Heart right ventricle (tissue), 16 donors: ENCODE measurements at regions of chr20 and their contacts with region 1.

Region 1: DNA sequence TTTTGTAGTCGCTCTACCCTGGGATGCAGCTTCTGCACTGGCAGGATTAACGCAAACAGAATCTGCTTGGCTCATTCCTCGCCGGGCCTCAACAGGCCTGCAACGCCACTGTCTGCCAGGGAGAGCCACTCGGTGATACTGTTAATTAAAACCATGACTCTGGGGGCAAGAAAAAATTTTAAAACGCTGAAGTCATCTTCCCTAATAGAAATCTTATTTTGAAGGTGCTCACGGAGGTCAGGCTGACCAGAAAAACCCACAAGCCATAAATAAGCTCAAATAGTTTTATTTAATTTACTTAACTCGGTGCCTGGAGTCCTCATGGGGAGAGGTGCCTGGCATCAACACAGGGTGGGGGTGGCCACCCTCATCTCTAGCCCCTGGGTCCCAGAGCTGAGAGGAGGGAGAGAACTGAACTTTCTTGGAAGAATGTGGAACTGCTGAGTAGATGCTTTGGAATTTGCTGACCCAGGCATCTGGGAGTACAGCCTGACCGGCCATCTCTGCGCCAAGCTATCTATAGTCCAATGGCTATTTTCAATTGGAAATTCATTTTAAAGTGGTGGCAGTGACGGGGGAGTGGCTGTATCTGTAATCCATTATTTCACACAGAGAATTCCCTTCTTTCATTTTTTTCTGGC is 104.7 kb downstream of the CDH26 start:
- DNase-seq: no peak
- ATAC-seq: peak in 5 of 8 donors; percentile 20 to 55 (median 35)
- H3K4me3 ChIP-seq: no peak overlapping the region
- H3K27ac ChIP-seq: peak overlapping the region in 2 of 10 donors; percentile 25 to 37
- H3K4me1 ChIP-seq: peaks cover 3 to 44% (median 21%) of the 10 kb centered on the region in 9 donors
- H3K27me3 ChIP-seq: peaks cover 0 to 5% (median 0%) of the 10 kb centered on the region in 7 donors
- CTCF ChIP-seq: no peak

Region 2: GRCh38 chr20:60131375-60131774 is 68.4 kb after region 1 on chr20:
- intact Hi-C with region 1: loop called in 1 of 10 experiments (anchors 5 kb)
- DNase-seq: no peak
- ATAC-seq: peak in 2 of 8 donors; percentile 24 to 63
- H3K4me3 ChIP-seq: no peak overlapping the region
- H3K27ac ChIP-seq: no peak overlapping the region
- H3K4me1 ChIP-seq: peaks cover 0 to 24% (median 0%) of the 10 kb centered on the region in 9 donors
- H3K27me3 ChIP-seq: no peaks in the 10 kb centered on the region
- CTCF ChIP-seq: no peak

Region 3: GRCh38 chr20:60262967-60263603 is 200.2 kb after region 1 on chr20:
- intact Hi-C with region 1: loop called in 6 of 10 experiments (anchors 5 to 10 kb)
- DNase-seq: no peak
- ATAC-seq: no peak
- H3K4me3 ChIP-seq: no peak overlapping the region
- H3K27ac ChIP-seq: no peak overlapping the region
- H3K4me1 ChIP-seq: peaks cover 0 to 4% (median 0%) of the 10 kb centered on the region in 9 donors
- H3K27me3 ChIP-seq: peaks cover 0 to 54% (median 11%) of the 10 kb centered on the region in 7 donors
- CTCF ChIP-seq: peak; percentile 17 to 81 (median 65)

Region 4: DNA sequence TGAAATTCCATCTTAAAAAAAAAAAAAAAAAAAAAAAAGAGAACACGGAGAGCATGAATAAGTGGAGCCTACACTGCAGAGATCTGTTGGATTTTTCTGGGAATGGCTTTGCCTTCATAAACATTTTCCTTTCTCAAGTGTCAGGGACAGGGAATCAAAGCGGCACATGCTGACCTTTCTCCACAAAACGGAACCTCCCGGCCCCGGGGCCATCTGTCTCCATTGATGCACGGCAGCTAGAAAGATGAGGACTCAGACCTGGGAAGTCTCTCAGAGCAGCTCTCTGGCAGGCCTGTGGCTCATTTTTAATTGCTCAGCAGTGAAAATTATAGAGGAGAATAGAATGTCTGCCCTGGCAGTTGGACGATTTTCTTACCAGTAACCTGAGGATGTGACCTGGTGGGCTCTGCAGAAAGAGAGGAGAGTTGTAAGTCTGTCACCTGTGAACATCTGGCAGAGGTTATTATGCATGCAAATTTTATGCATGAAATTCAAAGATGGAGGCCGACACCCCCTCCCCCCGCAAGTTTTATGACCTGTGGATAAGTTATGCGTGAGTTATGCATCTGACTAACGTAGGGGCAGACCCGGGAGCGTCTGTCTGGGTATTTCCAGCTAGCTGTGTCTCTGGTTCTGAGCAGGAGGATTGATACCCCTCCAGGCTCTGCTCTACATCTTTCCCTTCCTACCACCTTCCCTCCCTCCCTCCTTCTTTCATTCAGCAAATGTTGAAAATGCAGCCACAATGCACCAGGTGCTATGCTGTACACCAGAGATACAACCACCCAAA is 247.8 kb after region 1 on chr20:
- intact Hi-C with region 1: no loop called
- DNase-seq: no peak
- ATAC-seq: no peak
- H3K4me3 ChIP-seq: no peak overlapping the region
- H3K27ac ChIP-seq: no peak overlapping the region
- H3K4me1 ChIP-seq: peaks cover 0 to 5% (median 0%) of the 10 kb centered on the region in 9 donors
- H3K27me3 ChIP-seq: peaks cover 0 to 7% (median 0%) of the 10 kb centered on the region in 7 donors
- CTCF ChIP-seq: no peak

Region 5: GRCh38 chr20:61896058-61896961 is 1833.4 kb after region 1 on chr20:
- intact Hi-C with region 1: loop called in 4 of 10 experiments (anchors 10 kb)
- DNase-seq: peak in 1 of 2 donors; percentile 39
- ATAC-seq: peak in 6 of 8 donors; percentile 43 to 74 (median 63)
- H3K4me3 ChIP-seq: no peak overlapping the region
- H3K27ac ChIP-seq: no peak overlapping the region
- H3K4me1 ChIP-seq: peaks cover 0 to 7% (median 0%) of the 10 kb centered on the region in 9 donors
- H3K27me3 ChIP-seq: peaks cover 0 to 59% (median 26%) of the 10 kb centered on the region in 7 donors
- CTCF ChIP-seq: peak; percentile 31 to 74 (median 70)